Activated naive CD4-positive, alpha-beta T cell treated with anti-CD3 and anti-CD28 coated beads for 36 hours (primary cell): ENCODE measurements at regions of chr20 and their contacts with region 1.

Region 1: DNA sequence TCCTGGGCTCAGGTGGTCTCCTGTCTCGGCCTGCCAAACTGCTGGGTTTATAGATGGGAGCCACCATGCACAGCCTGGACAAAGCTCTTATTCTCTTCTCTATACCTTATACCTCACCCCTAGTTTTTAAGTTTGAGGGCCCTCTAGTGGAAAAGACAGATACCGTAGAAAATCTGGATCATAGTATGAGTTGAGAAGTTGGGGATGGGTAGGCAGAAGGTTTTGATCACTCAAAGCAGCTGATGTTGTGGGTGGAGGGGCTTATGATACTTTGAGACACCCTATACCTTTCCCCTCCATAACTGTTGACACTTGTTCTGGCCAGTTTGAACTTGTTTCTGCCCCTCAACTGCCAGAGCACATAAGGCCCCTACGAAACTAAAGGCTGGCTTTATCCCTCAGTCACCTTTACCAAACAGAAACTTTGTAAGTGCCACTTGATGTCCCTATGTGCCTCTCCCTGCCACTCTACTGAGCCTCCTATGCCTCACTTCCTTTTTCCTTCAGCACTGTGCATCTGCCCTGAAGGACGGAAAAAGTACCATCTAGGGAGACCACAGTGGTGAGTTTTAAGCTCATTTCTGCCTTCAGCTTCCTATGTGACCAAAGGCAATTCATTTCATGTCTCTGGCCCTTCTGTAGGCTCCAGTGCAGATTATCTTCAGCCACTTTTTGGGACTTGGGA is 28.6 kb downstream of the RALY start:
- DNase-seq: no peak
- H3K4me3 Mint-ChIP-seq: no peak overlapping the region
- H3K27ac Mint-ChIP-seq: peak overlapping the region; percentile 57
- H3K4me1 Mint-ChIP-seq: peaks cover 70% of the 10 kb centered on the region
- H3K27me3 Mint-ChIP-seq: no peaks in the 10 kb centered on the region

Region 2: DNA sequence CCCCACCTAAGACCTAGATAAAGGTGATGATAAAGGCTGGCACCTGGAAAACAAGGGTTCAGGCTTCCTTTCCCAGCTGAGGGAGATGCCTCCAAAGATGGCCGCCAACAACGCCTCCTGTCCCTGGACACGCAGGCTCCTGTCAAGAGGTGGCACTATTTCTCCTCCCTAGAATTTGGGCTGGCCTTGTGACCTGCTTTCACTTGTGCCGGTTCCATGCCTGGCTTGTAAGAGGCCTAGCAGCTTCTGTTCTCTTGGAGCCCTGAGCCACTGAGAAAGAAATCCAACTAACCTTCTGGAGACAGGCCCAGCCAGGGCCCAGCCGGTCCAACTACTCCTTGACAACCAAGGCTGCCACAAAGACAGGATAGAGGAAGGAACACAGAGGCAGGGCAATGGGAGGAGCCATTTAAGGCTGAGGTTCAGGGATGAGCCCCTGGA is 88.8 kb before region 1 on chr20:
- CTCF ChIA-PET with region 1: no interaction called
- intact Hi-C with region 1: loop called (anchors 2 kb)
- DNase-seq: peak; percentile 83
- H3K4me3 Mint-ChIP-seq: no peak overlapping the region
- H3K27ac Mint-ChIP-seq: no peak overlapping the region
- H3K4me1 Mint-ChIP-seq: no peaks in the 10 kb centered on the region
- H3K27me3 Mint-ChIP-seq: no peaks in the 10 kb centered on the region

Region 3: GRCh38 chr20:33947709-33948295 is 74.5 kb before region 1 on chr20:
- CTCF ChIA-PET with region 1: interaction called, 3 read pairs
- intact Hi-C with region 1: loop called (anchors 5 kb)
- DNase-seq: peak; percentile 75
- H3K4me3 Mint-ChIP-seq: no peak overlapping the region
- H3K27ac Mint-ChIP-seq: no peak overlapping the region
- H3K4me1 Mint-ChIP-seq: no peaks in the 10 kb centered on the region
- H3K27me3 Mint-ChIP-seq: peaks cover 3% of the 10 kb centered on the region